Pancreas (tissue), 10 donors: ENCODE measurements at regions of chr15 and their contacts with region 1.

Region 1: GRCh38 chr15:99155961-99156450 is 51.1 kb downstream of the SYNM start:
- DNase-seq: no peak
- ATAC-seq: peak in 1 of 4 donors; percentile 18
- H3K4me3 ChIP-seq: no peak overlapping the region
- H3K27ac ChIP-seq: no peak overlapping the region
- H3K4me1 ChIP-seq: peaks cover 8 to 16% (median 13%) of the 10 kb centered on the region in 3 donors
- H3K27me3 ChIP-seq: no peaks in the 10 kb centered on the region
- CTCF ChIP-seq: no peak

Region 2: DNA sequence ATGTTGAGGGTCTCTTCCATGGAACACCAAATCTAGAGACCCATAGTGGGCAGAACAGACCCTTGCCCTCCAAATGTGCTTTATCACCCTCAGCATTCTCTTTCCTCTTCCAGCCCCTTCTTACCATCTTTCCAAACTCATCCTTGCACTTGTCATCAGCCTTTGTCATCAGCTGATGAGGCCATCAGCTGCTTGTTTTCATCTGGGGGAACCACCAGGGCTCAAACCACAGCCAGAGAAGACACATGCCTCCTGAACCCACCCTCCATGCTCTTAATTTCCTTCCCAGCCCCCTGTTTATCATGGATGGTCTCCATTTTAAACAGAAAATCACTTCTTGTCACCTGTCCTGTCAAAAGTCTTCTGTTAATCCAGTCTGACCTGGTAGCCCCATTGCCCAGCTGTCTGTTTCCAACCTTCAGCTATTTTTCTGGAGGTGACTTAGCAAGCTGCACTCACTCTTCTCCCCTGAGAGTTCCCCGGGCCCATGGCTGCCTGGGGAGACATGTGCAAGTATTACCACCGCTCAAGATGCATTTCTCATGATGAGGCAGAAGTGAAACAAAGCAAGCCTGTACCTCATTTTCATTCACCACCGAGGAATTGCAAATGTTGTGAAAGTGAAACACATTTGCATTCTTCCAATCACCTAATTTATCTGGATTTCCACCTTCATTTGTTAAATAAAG is 65.9 kb before region 1 on chr15:
- intact Hi-C with region 1: loop called in 1 of 3 experiments (anchors 10 kb)
- DNase-seq: no peak
- ATAC-seq: no peak
- H3K4me3 ChIP-seq: no peak overlapping the region
- H3K27ac ChIP-seq: no peak overlapping the region
- H3K4me1 ChIP-seq: no peaks in the 10 kb centered on the region
- H3K27me3 ChIP-seq: no peaks in the 10 kb centered on the region
- CTCF ChIP-seq: no peak

Region 3: GRCh38 chr15:99275525-99276128 is 119.6 kb after region 1 on chr15:
- intact Hi-C with region 1: no loop called
- DNase-seq: no peak
- ATAC-seq: no peak
- H3K4me3 ChIP-seq: no peak overlapping the region
- H3K27ac ChIP-seq: no peak overlapping the region
- H3K4me1 ChIP-seq: no peaks in the 10 kb centered on the region
- H3K27me3 ChIP-seq: no peaks in the 10 kb centered on the region
- CTCF ChIP-seq: no peak